HepG2 (cell line): ENCODE measurements at regions of chr17 and their contacts with region 1.

Region 1: GRCh38 chr17:28524476-28525368 is 18.6 kb downstream of the FOXN1 start:
- DNase-seq: peak; percentile 70
- ATAC-seq: peak; percentile 70
- H3K4me3 ChIP-seq: peak overlapping the region in 2 of 3 experiments; percentile 21 to 55; a peak in 3 of 6 replicates
- H3K27ac ChIP-seq: no peak overlapping the region
- H3K4me1 ChIP-seq: peaks cover 37% of the 10 kb centered on the region
- H3K27me3 ChIP-seq: peaks cover 6 to 39% of the 10 kb centered on the region in 2 experiments
- CTCF ChIP-seq: no peak
- EP300 ChIP-seq: no peak
- POLR2A ChIP-seq: no peak
- RAD21 ChIP-seq: no peak

Region 2: GRCh38 chr17:28494445-28495188 is 30.1 kb before region 1 on chr17:
- CTCF ChIA-PET with region 1: no interaction called
- POLR2A ChIA-PET with region 1: no interaction called
- in situ Hi-C with region 1: no loop called
- intact Hi-C with region 1: no loop called
- DNase-seq: peak; percentile 27
- ATAC-seq: peak; percentile 79
- H3K4me3 ChIP-seq: no peak overlapping the region
- H3K27ac ChIP-seq: no peak overlapping the region
- H3K4me1 ChIP-seq: peaks cover 15% of the 10 kb centered on the region
- H3K27me3 ChIP-seq: peaks cover 1 to 6% of the 10 kb centered on the region in 2 experiments; a peak in 1 of 5 replicates
- CTCF ChIP-seq: peak; percentile 94
- EP300 ChIP-seq: no peak
- POLR2A ChIP-seq: no peak
- RAD21 ChIP-seq: peak; percentile 88

Region 3: GRCh38 chr17:28509789-28510188 is 14.9 kb before region 1 on chr17:
- CTCF ChIA-PET with region 1: no interaction called
- POLR2A ChIA-PET with region 1: no interaction called
- in situ Hi-C with region 1: no loop called
- intact Hi-C with region 1: no loop called
- DNase-seq: no peak
- ATAC-seq: no peak
- H3K4me3 ChIP-seq: no peak overlapping the region
- H3K27ac ChIP-seq: no peak overlapping the region
- H3K4me1 ChIP-seq: no peaks in the 10 kb centered on the region
- H3K27me3 ChIP-seq: peaks cover 15 to 79% of the 10 kb centered on the region in 2 experiments
- CTCF ChIP-seq: no peak
- EP300 ChIP-seq: no peak
- POLR2A ChIP-seq: no peak
- RAD21 ChIP-seq: no peak

Region 4: DNA sequence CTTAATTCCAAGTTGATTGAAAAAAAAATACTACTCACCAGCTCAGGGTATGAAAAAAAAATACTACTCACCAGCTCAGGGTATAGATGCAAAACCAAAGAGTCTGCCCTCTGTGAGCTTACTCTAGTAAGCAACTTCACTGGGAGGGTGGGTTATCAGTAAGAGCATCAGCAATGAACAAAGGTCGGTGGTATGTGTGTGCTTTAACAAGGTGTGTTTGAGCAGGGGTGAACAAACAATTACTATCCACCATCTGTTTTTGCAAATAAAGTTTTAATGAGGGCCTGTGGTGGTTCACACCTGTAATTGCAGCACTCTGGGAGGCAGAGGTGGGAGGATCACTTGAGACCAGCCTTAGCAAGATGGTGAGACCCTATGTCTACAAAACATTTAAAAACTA is 749.2 kb after region 1 on chr17:
- CTCF ChIA-PET with region 1: no interaction called
- POLR2A ChIA-PET with region 1: no interaction called
- in situ Hi-C with region 1: no loop called
- intact Hi-C with region 1: loop called (anchors 5 kb)
- DNase-seq: peak; percentile 68
- ATAC-seq: peak; percentile 85
- H3K4me3 ChIP-seq: no peak overlapping the region
- H3K27ac ChIP-seq: peak overlapping the region; percentile 3
- H3K4me1 ChIP-seq: peaks cover 57% of the 10 kb centered on the region
- H3K27me3 ChIP-seq: no peaks in the 10 kb centered on the region
- CTCF ChIP-seq: no peak
- EP300 ChIP-seq: peak in 1 of 2 experiments; percentile 23; a peak in 1 of 4 replicates
- POLR2A ChIP-seq: no peak
- RAD21 ChIP-seq: no peak